ENCODE measurements at regions of chr14 and their contacts with region 1.

Region 1: DNA sequence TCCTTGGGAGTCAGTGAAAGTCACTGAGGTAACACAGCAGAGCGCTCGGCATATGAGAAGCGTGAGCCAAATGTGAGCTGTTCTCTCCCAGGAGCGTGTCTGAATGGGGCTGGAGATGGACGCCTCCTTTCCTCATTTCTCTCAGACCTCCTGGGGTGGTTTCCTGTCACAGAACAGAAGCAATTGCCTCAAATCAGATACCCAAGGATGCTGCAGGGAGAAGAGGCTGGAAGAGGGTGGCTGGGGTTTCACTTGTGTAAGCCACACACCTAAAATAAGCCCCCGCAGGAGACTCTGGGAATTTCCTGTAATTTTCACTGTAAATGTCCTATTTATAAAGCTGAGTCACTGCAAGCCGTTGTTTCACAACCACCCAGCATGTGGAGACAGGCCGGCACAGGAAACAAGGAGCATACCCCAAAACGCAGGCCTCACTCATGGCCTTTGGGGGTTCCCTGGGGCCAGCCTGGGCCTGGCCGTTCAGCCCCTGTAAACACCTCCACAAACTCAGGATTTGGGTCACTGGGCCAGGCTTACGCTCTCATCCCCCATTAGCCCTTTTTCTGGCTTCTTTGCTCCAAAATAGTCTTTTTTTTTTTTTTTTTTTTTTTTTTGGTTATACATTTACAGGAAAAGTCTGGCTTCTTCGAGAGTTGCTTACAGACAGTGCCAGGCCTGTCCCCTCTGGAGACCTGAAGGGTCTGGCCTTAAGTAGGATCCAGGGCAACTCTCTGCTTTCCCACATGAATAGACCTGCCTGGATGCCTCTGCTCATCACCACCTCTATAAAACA is 55.3 kb downstream of the VCPKMT start:
- DNase-seq: peak; percentile 41
- H3K4me3 ChIP-seq: peak overlapping the region; percentile 65
- H3K27ac ChIP-seq: peak overlapping the region; percentile 93
- H3K4me1 ChIP-seq: peaks cover 61% of the 10 kb centered on the region
- CTCF ChIP-seq: no peak

Region 2: DNA sequence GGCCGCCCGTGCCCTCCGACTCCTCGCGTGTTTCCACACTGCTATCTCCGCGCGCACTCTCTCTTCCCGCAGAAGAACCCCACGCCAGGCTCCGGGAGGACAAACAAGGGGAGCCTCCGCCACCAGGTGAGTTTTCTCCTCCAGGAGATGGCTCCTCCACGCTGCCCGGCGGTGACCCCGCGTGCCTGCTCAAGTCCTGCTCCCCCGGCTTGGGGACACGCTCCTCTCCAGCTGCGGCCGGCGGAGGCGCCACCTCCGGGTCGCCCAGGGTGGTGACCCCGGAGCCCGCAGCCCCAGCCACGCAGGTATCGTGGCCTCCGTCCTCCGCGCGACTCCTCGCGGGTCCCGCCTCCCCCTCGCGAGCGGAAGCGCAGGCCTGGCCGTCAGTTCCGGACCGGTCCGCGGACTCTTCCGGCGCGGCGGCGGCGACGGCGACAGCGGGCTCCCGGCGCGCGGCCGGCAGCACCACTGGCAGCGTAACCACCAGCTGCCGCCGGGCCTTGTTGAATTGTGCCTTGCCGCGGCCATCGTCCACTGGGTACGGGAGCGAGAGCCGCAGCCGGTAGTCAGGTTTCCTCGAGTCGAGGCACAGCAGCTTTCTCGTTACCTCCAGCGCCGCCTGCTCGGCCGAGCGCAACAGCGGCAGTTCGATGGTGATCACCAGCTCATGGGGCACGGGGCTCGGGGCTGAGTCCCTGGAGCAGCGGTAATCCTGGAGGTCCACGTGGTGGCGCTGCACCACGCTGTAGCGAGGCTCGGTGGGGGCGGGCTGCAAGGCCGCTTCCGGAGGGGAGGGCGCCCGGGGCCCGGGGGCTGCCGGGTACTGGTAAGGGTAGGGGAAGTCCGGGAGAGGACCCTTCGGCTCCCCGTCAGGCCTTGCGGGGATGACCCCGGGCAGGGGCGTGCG is 427.2 kb before region 1 on chr14:
- CTCF ChIA-PET with region 1: no interaction called
- POLR2A ChIA-PET with region 1: no interaction called
- intact Hi-C with region 1: loop called (anchors 5 kb)
- DNase-seq: peak; percentile 98
- H3K4me3 ChIP-seq: peak overlapping the region; percentile 78
- H3K27ac ChIP-seq: peak overlapping the region; percentile 93
- H3K4me1 ChIP-seq: peaks cover 31% of the 10 kb centered on the region
- CTCF ChIP-seq: peak; percentile 87

Region 3: GRCh38 chr14:49862089-49862673 is 198.9 kb before region 1 on chr14:
- CTCF ChIA-PET with region 1: interaction called, 9 read pairs
- POLR2A ChIA-PET with region 1: interaction called, 18 read pairs
- intact Hi-C with region 1: loop called (anchors 2 kb)
- DNase-seq: peak; percentile 89
- H3K4me3 ChIP-seq: peak overlapping the region; percentile 75
- H3K27ac ChIP-seq: peak overlapping the region; percentile 83
- H3K4me1 ChIP-seq: peaks cover 52% of the 10 kb centered on the region
- CTCF ChIP-seq: peak; percentile 100

Region 4: GRCh38 chr14:49892636-49893308 is 168.3 kb before region 1 on chr14 and contains the start of gene ARF6:
- CTCF ChIA-PET with region 1: no interaction called
- POLR2A ChIA-PET with region 1: interaction called, 7 read pairs
- intact Hi-C with region 1: loop called (anchors 1 kb)
- DNase-seq: peak; percentile 99
- H3K4me3 ChIP-seq: peak within 1 kb of the TSS; percentile 98
- H3K27ac ChIP-seq: peak within 1 kb of the TSS; percentile 91
- H3K4me1 ChIP-seq: peaks cover 26% of the 10 kb centered on the region
- CTCF ChIP-seq: no peak
- total RNA-seq, gene ARF6: 47.6 and 51.0 TPM in 2 replicates

Region 5: DNA sequence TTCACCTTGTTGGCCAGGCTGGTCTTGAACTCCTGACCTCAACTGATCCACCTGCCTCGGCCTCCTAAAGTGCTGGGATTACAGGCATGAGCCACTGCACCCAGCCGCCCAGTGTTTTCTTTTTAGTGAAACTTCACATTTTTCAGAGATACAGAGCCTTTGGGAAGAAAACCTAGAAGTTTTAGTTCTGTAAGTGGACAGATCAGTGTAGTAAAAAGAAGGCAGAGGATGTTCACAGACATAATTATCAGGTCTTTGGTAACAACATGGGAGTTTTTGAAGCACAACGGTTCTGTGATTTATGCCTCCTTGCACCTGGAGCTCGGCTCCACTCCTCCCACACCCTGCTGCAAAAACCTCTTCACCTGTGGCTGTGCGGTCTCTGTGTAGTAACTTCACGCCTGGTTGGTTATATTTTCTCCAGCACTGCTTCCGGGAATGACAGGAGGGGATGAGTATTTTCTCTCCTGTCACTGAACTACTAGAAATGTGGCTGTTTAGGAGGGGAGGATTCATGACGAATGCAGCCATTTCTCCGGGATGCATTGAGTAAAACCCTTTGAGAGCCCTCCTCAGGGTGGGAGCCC is 101.2 kb before region 1 on chr14:
- CTCF ChIA-PET with region 1: no interaction called
- POLR2A ChIA-PET with region 1: interaction called, 3 read pairs
- intact Hi-C with region 1: loop called (anchors 5 kb)
- DNase-seq: peak; percentile 96
- H3K4me3 ChIP-seq: peak overlapping the region; percentile 54
- H3K27ac ChIP-seq: peak overlapping the region; percentile 95
- H3K4me1 ChIP-seq: peaks cover 81% of the 10 kb centered on the region
- CTCF ChIP-seq: no peak

Region 6: DNA sequence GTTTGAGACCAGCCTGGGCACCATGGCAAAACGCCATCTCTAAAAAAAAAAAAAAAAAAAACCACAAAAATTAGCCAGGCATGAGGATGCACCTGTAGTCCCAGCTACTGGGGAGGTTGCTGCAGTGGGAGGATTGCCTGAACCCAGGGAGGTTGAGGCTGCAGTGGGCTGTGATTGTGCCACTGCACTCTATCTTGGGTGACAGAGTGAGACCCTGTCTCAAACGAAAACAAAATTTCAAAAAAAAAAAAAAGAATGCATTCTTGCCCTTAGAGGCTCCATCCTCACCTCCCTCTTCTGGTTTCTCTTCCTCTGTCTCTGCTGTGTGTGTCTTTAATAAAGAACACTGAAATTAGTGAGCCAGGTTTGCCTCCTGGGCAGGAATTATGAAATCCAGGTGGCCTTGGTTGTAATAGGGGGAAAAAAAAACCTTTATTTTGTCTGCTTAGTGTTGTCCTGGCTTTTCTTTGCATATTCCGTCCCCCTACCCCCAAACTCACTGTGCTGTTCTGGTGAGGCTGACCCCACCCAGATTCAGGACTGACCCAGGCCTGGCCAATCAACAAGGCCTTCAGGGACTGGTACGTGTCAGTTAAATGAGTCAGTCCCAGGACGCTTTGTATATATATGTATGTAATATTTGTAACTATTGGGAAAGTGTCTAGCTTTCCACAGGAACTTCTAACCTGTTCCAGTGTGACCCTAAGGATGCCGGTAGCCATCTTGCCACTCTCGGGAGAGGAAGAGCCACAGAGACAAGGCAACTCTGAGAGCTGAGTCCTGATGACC is 52.3 kb before region 1 on chr14:
- CTCF ChIA-PET with region 1: interaction called, 3 read pairs
- POLR2A ChIA-PET with region 1: interaction called, 21 read pairs
- intact Hi-C with region 1: loop called (anchors 1 kb)
- DNase-seq: peak; percentile 77
- H3K4me3 ChIP-seq: peak overlapping the region; percentile 48
- H3K27ac ChIP-seq: peak overlapping the region; percentile 94
- H3K4me1 ChIP-seq: peaks cover 88% of the 10 kb centered on the region
- CTCF ChIP-seq: no peak

Region 7: GRCh38 chr14:50085570-50086320 is 24.7 kb after region 1 on chr14:
- CTCF ChIA-PET with region 1: no interaction called
- POLR2A ChIA-PET with region 1: interaction called, 7 read pairs
- intact Hi-C with region 1: loop called (anchors 2 kb)
- DNase-seq: peak; percentile 79
- H3K4me3 ChIP-seq: no peak overlapping the region
- H3K27ac ChIP-seq: peak overlapping the region; percentile 21
- H3K4me1 ChIP-seq: peaks cover 47% of the 10 kb centered on the region
- CTCF ChIP-seq: no peak

Region 8: GRCh38 chr14:50106178-50106577 is 45.1 kb after region 1 on chr14:
- CTCF ChIA-PET with region 1: no interaction called
- POLR2A ChIA-PET with region 1: no interaction called
- intact Hi-C with region 1: no loop called
- DNase-seq: no peak
- H3K4me3 ChIP-seq: no peak overlapping the region
- H3K27ac ChIP-seq: no peak overlapping the region
- H3K4me1 ChIP-seq: peaks cover 6% of the 10 kb centered on the region
- CTCF ChIP-seq: no peak

Region 9: DNA sequence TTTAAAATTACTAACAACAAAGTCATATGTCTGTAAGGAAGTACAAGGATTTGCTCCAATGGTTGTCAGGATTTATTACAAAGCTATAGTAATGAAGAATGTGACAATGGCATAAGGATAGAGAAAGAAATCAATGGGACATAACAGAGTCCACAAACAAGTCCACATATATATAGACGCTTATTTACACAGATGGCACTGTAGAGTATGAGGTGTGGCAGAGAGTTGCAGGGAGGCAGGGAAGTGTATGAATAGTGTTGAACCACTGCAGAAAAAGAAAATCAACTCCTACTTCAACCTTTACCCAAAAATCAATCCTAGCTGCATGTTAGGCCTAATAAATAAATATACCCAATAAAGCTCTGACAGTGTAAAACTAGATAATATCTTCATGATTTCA is 149.0 kb after region 1 on chr14:
- CTCF ChIA-PET with region 1: no interaction called
- POLR2A ChIA-PET with region 1: no interaction called
- intact Hi-C with region 1: no loop called
- DNase-seq: no peak
- H3K4me3 ChIP-seq: no peak overlapping the region
- H3K27ac ChIP-seq: no peak overlapping the region
- H3K4me1 ChIP-seq: no peaks in the 10 kb centered on the region
- CTCF ChIP-seq: no peak

Region 10: GRCh38 chr14:50321009-50321660 is 260.1 kb after region 1 on chr14:
- CTCF ChIA-PET with region 1: no interaction called
- POLR2A ChIA-PET with region 1: no interaction called
- intact Hi-C with region 1: no loop called
- DNase-seq: peak; percentile 80
- H3K4me3 ChIP-seq: no peak overlapping the region
- H3K27ac ChIP-seq: no peak overlapping the region
- H3K4me1 ChIP-seq: peaks cover 14% of the 10 kb centered on the region
- CTCF ChIP-seq: peak; percentile 99

Measured in OCI-LY7 (cell line).